Esophagus squamous epithelium (tissue), 5 donors: ENCODE measurements at regions of chr10 and their contacts with region 1.

Region 1: DNA sequence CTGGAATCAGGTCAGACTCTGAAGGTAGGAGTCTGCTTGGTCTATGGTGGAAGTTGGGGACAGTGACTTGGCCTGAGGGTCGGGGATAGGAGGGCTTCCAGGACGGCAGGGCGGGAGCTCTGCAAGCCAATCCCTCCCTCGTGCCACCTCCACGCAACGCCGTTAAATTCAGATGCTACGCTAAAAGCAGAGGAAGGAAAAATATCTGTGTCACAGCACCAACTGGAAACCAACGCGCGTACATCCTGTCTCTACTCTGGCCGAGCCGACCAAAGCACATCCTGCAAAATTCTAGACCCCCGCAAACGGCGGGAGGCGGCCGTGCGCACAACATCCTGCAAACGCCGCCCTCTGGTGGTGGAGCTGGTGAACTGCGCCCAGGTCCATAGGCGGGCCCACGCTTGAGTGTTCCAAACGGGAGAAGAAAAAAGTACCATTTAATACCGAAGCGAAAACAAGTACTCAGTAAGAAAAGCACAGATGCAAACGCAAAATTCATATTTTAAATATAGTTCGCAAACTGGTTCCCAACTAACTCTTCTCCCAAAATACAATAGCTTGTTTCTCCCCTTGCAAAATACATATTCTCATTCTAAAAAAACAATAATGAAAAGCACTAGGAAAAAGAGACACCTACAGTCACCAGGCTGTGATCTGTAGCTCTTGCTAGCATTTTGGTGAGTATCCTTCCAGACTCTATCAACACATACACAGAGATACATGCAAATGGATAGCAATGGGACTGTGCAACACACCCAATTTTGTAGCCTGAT is 45.7 kb upstream of the HSPA12A start:
- DNase-seq: no peak
- H3K4me3 ChIP-seq: peak overlapping the region in 3 of 4 donors; percentile 11 to 59 (median 14)
- H3K27ac ChIP-seq: no peak overlapping the region
- H3K4me1 ChIP-seq: peaks cover 3 to 10% (median 8%) of the 10 kb centered on the region in 3 donors
- H3K27me3 ChIP-seq: peaks cover 0 to 19% (median 0%) of the 10 kb centered on the region in 4 donors
- CTCF ChIP-seq: peak; percentile 82 to 99 (median 96)
- POLR2A ChIP-seq: no peak

Region 2: GRCh38 chr10:116674901-116675423 is 113.1 kb before region 1 on chr10:
- intact Hi-C with region 1: loop called (anchors 2 kb)
- DNase-seq: no peak
- H3K4me3 ChIP-seq: no peak overlapping the region
- H3K27ac ChIP-seq: no peak overlapping the region
- H3K4me1 ChIP-seq: peaks cover 0 to 6% (median 3%) of the 10 kb centered on the region in 3 donors
- H3K27me3 ChIP-seq: peaks cover 0 to 10% (median 0%) of the 10 kb centered on the region in 4 donors
- CTCF ChIP-seq: no peak
- POLR2A ChIP-seq: no peak